Dendritic cell treated with granulocyte-macrophage colony-stimulating factor and Interleukin-4, amounts not matched to agents 40 ng/mL and 50 ng/mL, for 4 days (primary cell): ENCODE measurements at regions of chr2 and their contacts with region 1.

Region 1: DNA sequence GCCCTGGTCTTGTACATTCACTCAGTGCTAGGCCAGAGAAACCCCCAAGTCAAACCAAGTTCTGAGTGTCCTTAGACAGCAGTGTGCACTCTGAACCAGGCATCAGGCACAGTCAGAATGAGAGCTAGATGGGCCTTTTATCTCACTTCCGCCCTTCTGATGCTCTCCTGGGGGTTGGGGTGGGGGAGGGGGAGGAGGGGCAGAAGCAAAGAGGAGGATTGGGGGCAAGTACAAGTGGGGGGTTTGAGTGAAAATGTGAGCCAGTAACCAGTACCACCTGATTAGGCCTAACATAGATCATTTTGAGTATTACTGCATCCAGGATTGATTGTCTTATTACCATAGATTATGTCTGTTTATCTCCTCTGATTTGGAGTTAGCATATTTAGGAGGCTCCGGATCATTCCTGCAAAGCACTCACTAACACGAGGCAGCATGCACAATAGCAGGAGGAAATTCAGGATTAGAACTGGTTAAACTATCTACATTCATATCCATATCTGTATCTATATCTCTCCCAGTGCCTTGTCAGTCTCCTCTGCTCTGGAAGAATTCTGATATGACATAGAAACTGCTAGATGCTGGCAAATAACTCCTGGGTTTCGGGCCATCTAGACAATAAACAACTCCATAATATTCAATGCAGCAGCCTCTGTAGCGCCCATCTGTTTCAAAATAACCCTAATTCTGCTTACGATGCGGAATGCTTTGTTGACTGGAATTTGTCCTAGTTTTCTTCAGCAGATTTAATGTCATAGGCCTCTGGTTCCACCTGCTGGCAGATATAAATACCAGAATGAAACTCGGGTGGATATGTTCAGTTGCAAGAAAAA is 149.1 kb downstream of the RHBDD1 start:
- H3K4me3 Mint-ChIP-seq: no peak overlapping the region
- H3K27ac Mint-ChIP-seq: no peak overlapping the region
- H3K4me1 Mint-ChIP-seq: no peaks in the 10 kb centered on the region
- H3K27me3 Mint-ChIP-seq: no peaks in the 10 kb centered on the region

Region 2: DNA sequence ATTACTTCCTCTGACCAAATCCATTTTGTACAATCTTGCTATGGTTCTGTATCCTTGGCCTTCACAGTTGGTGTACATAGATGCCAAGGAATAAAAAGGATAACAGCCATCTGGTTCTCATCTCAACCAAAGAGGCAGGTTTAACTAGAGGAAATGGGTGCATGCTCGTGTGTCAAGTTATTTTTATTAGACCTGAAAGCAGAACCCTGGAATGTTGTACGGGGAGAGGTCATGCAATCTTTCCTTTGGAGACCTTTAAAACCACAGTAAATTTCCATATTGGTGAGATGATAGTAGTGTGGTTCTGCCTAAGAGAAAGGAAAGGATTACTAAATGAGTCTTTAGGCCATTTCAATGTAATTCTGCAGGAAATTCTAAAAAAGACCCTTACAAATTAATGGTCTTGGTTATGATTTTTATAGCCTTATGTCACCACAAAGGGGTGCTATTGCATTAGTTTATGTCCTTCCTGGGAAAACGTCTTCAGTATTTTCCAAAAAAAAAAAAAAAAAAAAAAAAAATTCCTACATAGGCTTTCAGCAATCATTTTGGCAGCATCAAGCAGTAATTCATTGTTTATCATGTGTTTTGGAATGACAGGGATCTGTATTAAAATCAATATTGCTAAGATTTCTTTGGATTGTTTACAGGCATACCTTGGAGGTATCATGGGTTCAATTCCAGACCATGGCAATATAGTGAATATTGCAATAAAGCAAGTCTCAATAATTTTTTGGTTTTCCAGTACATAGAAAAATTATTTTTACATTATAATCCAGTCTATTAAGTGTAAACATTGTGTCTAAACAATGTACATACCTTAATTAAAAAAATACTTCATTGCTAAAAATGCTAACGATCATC is 1314.6 kb before region 1 on chr2:
- intact Hi-C with region 1: loop called (anchors 5 kb)
- H3K4me3 Mint-ChIP-seq: no peak overlapping the region
- H3K27ac Mint-ChIP-seq: no peak overlapping the region
- H3K4me1 Mint-ChIP-seq: no peaks in the 10 kb centered on the region
- H3K27me3 Mint-ChIP-seq: no peaks in the 10 kb centered on the region

Region 3: GRCh38 chr2:225889446-225889850 is 1095.5 kb before region 1 on chr2:
- intact Hi-C with region 1: loop called (anchors 5 kb)
- H3K4me3 Mint-ChIP-seq: no peak overlapping the region
- H3K27ac Mint-ChIP-seq: no peak overlapping the region
- H3K4me1 Mint-ChIP-seq: no peaks in the 10 kb centered on the region
- H3K27me3 Mint-ChIP-seq: peaks cover 7% of the 10 kb centered on the region

Region 4: DNA sequence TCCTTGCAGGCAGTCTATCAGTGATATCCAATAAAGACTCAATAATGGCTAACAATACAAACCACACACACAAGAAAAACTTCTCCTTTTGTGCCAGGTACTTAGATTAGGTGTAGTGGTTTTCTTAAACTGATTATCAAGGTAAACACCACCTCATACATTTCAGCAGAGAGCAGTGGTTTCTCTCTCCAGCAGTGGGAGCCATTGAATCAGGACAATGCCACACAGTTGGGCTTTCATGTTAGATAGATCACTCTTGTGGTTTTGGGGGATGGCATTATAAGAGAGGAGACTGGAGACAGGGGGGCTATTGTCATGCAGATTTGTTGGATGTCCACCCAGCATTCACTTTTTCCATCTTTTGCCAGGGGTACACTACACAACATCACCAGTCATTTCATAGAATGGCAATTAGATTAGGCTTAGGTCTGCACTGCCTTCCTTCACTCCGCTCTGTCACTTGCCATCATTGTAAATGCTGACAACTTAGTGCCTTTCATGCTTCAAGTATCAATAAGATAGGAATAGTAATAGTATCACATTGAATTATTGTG is 171.7 kb before region 1 on chr2:
- intact Hi-C with region 1: loop called (anchors 10 kb)
- H3K4me3 Mint-ChIP-seq: no peak overlapping the region
- H3K27ac Mint-ChIP-seq: no peak overlapping the region
- H3K4me1 Mint-ChIP-seq: no peaks in the 10 kb centered on the region
- H3K27me3 Mint-ChIP-seq: peaks cover 17% of the 10 kb centered on the region